ENCODE measurements at regions of chr16 and their contacts with region 1.

Region 1: DNA sequence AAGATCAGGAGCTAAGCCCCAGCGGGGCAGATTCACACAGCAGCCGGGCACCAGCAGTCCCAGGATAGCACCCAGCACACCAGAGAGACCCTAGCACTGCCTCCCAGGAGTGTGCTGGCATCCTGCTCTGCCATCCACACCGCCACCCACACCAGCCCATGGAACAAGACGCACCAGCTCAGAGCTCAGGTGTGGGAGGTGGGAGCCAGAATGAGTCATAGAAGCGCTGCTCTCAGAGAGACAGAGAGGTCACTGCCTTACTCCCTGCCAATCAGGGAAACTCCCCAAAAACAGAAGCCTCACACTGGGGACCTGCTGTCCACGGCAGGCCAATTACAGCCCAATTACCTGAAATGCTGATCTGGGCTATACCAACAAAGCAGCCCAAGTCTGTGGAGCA is 64.9 kb downstream of the CDYL2 start:
- DNase-seq: peak in 9 of 10 donors; percentile 21 to 77 (median 64)
- H3K4me3 ChIP-seq: no peak overlapping the region
- H3K27ac ChIP-seq: peak overlapping the region in 23 of 59 donors; percentile 5 to 69 (median 40)
- H3K27me3 ChIP-seq: no peaks in the 10 kb centered on the region
- CTCF ChIP-seq: no peak

Region 2: GRCh38 chr16:80682421-80683070 is 57.0 kb before region 1 on chr16:
- intact Hi-C with region 1: loop called in 1 of 2 experiments (anchors 5 kb)
- DNase-seq: peak in 5 of 10 donors; percentile 48 to 74 (median 66)
- H3K4me3 ChIP-seq: no peak overlapping the region
- H3K27ac ChIP-seq: peak overlapping the region in 50 of 59 donors; percentile 5 to 87 (median 70)
- H3K27me3 ChIP-seq: no peaks in the 10 kb centered on the region
- CTCF ChIP-seq: no peak

Measured in dorsolateral prefrontal cortex (tissue), 120 donors.